K562 (cell line): ENCODE measurements at regions of chr7 and their contacts with region 1.

Region 1: DNA sequence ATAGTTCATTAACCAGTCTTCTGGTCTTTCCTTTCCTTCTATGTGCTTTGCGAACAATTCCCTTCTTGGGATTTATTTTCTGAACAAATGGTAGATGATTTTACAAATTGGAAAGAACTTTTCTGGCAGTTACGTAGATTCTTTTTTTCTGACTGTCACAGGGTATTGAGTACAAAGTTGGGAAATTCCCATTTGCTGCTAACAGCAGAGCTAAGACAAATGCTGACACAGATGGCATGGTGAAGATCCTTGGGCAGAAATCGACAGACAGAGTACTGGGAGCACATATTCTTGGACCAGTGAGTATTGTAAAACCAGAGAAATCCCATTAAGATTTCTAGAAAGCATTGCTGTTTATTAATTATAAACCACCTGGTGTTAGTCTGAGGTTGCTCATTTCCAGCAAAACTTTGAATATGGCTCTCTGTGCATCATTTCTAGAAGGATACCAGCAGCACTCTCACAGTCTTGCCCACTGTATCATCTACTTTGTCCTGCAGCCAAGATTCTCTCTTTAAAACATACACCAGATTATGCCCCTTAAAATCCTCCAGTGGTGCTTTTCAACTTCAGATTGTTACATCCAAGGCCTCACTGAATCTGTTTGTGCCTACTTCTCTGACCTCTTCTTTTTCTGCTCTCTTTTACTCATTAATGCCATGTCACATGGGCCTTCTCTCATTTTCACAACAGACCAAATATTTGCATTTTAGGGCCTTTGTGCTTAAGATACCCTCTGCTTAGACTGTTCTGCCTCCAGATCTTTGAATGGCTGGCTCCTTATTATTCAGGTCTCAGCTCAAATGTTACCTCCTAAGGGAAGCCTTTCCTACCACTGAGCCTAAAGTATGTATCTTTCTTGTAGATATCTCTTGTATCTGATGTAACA is 27.0 kb downstream of the DLD start:
- DNase-seq: no peak
- ATAC-seq: no peak
- H3K4me3 ChIP-seq: no peak overlapping the region
- H3K27ac ChIP-seq: no peak overlapping the region
- H3K4me1 ChIP-seq: no peaks in the 10 kb centered on the region
- H3K27me3 ChIP-seq: no peaks in the 10 kb centered on the region
- CTCF ChIP-seq: no peak
- EP300 ChIP-seq: no peak
- POLR2A ChIP-seq: no peak
- RAD21 ChIP-seq: no peak

Region 2: DNA sequence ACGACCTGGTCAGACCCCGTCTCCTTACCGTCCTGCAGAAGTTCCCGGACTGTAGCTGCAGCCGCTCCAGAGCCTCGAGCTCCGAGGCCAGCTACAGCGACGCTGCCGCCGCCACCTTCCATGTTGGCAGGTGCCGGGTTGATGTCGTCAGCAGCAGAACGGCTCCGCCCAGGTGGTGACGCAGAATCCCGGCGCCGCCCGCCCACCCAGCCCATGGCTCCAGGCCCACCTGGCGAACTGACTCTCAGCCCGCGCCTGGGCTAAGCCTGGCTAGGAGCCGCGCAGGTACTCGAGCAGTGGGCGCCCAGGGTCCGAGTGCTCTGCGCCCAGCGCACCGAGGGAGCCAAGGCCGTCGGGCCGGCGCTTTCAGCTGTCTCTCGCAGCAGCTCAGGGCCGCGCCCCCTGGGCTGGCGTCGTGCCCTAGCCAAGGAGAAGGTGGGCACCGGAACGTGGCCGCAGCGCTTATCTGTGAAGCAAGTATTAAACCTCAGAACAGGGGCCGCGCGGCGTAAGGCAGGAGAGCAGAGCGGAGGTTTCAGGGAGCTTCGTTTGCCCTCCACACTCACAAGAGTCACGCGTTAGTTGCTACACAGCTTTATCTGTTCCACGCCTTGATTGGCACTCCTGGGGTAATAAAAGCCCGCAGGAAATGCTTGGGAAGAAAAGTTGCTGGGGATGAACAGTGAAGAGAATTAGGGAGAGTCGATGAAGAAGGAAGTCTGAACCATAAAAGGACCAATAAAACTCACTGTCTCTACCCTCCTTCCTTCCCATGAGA is 354.0 kb before region 1 on chr7 and contains the starts of genes COG5 and DUS4L:
- CTCF ChIA-PET with region 1: no interaction called
- POLR2A ChIA-PET with region 1: no interaction called
- in situ Hi-C with region 1: no loop called
- intact Hi-C with region 1: no loop called
- DNase-seq: peak; percentile 90 to 95 (median 92)
- ATAC-seq: peak; percentile 91
- H3K4me3 ChIP-seq: peak within 1 kb of the TSS; percentile 74
- H3K27ac ChIP-seq: peak within 1 kb of the TSS; percentile 81
- H3K4me1 ChIP-seq: peaks cover 10 to 27% of the 10 kb centered on the region in 2 experiments; a peak in 4 of 5 replicates
- H3K27me3 ChIP-seq: no peaks in the 10 kb centered on the region
- CTCF ChIP-seq: 0 out of 6 replicates have a peak, but pooled peaks of 1 of the 3 experiments have one; percentile 3
- EP300 ChIP-seq: no peak
- POLR2A ChIP-seq: peak; percentile 94
- RAD21 ChIP-seq: no peak
- polyA plus RNA-seq, gene COG5: 15.3 to 25.9 TPM
- polyA plus RNA-seq, gene DUS4L: 12.2 to 14.5 TPM

Region 3: DNA sequence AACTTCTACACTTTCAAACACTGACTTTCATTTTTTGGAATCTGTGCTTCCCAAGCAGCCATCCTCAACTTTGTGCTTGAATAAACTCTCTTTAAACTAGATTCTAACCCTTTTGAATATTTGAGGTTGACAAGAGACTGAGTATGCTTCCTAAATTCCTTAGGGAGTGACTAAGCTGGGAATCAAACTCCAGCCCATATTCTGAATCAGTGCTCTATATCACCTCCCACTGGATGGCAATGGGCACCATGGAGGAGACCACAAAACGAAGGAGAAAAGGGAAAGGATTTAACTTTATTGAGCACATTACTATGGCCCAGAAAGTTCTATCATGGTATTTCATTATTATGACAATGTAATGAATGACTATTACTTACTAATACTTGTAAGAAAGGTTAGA is 274.6 kb before region 1 on chr7:
- CTCF ChIA-PET with region 1: no interaction called
- POLR2A ChIA-PET with region 1: no interaction called
- in situ Hi-C with region 1: no loop called
- intact Hi-C with region 1: no loop called
- DNase-seq: no peak
- ATAC-seq: peak; percentile 48; the same call in 1 of the 3 replicates
- H3K4me3 ChIP-seq: no peak overlapping the region
- H3K27ac ChIP-seq: no peak overlapping the region
- H3K4me1 ChIP-seq: no peaks in the 10 kb centered on the region
- H3K27me3 ChIP-seq: peaks cover 4 to 6% of the 10 kb centered on the region in 2 experiments; a peak in 2 of 5 replicates
- CTCF ChIP-seq: peak in 1 of 3 experiments; percentile 25; a peak in 1 of 6 replicates
- EP300 ChIP-seq: no peak
- POLR2A ChIP-seq: no peak
- RAD21 ChIP-seq: no peak

Region 4: GRCh38 chr7:107768272-107768671 is 149.7 kb before region 1 on chr7:
- CTCF ChIA-PET with region 1: no interaction called
- POLR2A ChIA-PET with region 1: no interaction called
- in situ Hi-C with region 1: no loop called
- intact Hi-C with region 1: no loop called
- DNase-seq: no peak
- ATAC-seq: no peak
- H3K4me3 ChIP-seq: no peak overlapping the region
- H3K27ac ChIP-seq: no peak overlapping the region
- H3K4me1 ChIP-seq: no peaks in the 10 kb centered on the region
- H3K27me3 ChIP-seq: peaks cover 14 to 16% of the 10 kb centered on the region in 2 experiments; a peak in 3 of 5 replicates
- CTCF ChIP-seq: no peak
- EP300 ChIP-seq: no peak
- POLR2A ChIP-seq: no peak
- RAD21 ChIP-seq: no peak

Region 5: DNA sequence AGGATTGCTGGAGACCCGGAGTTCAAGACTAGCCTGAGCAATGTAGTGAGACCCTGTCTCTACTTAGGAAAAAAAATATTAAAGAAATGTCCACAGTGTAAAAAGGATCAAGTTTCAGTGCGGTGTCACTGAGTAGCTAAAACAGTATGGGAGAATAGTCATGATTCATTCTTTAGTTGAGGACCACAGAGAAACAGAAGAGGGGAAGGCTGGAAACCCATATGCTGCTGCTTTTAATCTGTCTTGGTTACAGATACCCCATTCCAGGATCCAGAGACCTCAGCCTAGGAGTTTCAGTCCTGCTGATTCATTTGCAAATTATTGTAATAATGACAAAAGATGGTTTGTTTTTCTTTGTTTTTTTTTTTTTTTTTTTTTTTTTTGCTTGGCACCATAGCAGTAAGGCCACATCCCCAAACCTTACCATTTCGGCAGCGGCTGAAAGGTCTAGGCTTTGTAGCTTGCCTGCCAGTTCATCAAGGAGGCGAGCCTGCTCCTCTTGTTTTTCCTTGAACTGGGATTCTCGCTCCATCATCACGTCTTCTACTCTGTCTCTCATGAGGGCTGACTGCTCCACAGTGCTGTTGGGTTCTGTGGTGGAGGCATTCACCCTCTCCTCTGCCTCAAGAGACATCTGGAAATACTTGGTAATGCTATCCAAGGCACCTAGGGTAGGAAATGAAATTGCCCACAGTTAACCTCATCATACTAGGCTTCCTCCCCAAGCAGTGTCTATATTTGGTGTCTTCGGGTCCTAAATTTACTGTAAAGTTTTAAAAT is 17.2 kb after region 1 on chr7:
- CTCF ChIA-PET with region 1: no interaction called
- POLR2A ChIA-PET with region 1: interaction called, 14 read pairs
- in situ Hi-C with region 1: no loop called
- intact Hi-C with region 1: no loop called
- DNase-seq: no peak
- ATAC-seq: peak; percentile 32
- H3K4me3 ChIP-seq: no peak overlapping the region
- H3K27ac ChIP-seq: no peak overlapping the region
- H3K4me1 ChIP-seq: no peaks in the 10 kb centered on the region
- H3K27me3 ChIP-seq: no peaks in the 10 kb centered on the region
- CTCF ChIP-seq: no peak
- EP300 ChIP-seq: no peak
- POLR2A ChIP-seq: 0 out of 2 replicates have a peak, but pooled peaks have one; percentile 27
- RAD21 ChIP-seq: no peak

Region 6: DNA sequence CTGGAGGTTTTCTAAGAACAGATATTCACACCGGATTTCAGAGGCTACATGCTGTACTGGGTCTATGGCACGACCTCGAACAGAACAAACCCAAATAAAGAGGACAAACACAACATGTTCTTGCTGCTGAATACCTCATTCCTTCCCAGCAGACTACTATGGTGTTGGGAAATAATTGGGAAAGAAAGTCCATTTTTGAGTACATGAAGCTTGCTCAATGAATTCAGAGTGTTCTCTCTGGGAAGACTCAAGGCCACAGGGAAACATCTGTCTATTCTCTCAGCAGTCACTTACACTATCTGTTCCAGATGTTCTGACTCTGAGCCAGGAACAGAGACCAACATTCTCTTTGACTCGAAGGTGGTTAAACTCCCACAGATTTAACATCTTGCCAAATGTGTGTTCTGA is 54.1 kb after region 1 on chr7:
- CTCF ChIA-PET with region 1: no interaction called
- POLR2A ChIA-PET with region 1: no interaction called
- in situ Hi-C with region 1: no loop called
- intact Hi-C with region 1: loop called (anchors 10 kb)
- DNase-seq: peak; percentile 52 to 72 (median 62)
- ATAC-seq: peak; percentile 77
- H3K4me3 ChIP-seq: no peak overlapping the region
- H3K27ac ChIP-seq: no peak overlapping the region
- H3K4me1 ChIP-seq: peaks cover 0 to 22% of the 10 kb centered on the region in 2 experiments; a peak in 3 of 5 replicates
- H3K27me3 ChIP-seq: no peaks in the 10 kb centered on the region
- CTCF ChIP-seq: no peak
- EP300 ChIP-seq: peak; percentile 36; the same call in 1 of the 2 replicates
- POLR2A ChIP-seq: no peak
- RAD21 ChIP-seq: no peak

Region 7: DNA sequence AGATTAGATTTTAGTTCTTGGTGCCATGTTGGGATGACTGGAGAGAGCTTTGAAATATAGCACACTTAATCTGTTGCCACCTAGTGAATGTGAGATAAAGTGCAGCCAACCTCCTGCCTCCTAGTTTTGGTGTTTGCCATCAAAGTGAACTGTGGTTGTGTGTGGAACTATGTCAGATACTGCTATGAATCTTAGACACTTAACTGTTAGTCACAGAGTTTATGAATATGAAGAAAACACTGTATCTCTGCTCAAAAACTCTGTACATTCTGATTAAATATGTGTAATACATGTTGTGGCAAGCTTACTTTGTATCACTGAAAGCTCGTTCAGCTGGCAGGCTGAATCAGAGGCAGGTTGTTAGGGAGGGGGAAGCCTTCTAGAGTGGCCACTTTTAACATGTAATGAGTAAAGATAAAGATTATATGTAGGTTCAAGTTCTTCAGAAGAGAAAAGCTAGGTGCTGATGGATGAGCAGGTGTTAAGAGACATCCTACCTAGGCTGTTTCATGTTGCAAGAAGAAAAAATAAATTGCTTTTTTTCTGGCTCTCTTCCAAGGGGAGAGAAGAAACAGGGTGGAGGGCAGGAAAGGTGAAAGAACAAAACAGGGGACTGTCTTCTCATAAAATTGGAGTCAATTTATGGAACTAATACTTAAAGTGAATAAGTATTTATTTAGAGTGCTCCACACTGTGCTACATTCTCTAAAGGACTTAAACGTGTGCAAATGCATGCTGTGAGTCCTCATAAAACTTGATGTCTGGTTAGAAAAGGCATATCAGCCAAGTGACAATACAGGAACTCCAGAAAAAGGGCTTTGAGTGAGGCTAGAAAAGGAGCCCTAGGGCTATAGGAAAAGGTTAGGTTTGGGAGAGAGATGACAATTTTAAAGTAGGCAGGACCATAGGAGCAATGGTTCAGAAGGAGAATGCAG is 99.1 kb after region 1 on chr7:
- CTCF ChIA-PET with region 1: no interaction called
- POLR2A ChIA-PET with region 1: no interaction called
- in situ Hi-C with region 1: no loop called
- intact Hi-C with region 1: loop called (anchors 5 kb)
- DNase-seq: peak in 2 of 4 experiments; percentile 45
- ATAC-seq: peak; percentile 68
- H3K4me3 ChIP-seq: no peak overlapping the region
- H3K27ac ChIP-seq: no peak overlapping the region
- H3K4me1 ChIP-seq: peaks cover 5 to 24% of the 10 kb centered on the region in 2 experiments
- H3K27me3 ChIP-seq: no peaks in the 10 kb centered on the region; a peak in 1 of 5 replicates
- CTCF ChIP-seq: peak; percentile 55 to 67 (median 60); a peak in 5 of 6 replicates
- EP300 ChIP-seq: no peak
- POLR2A ChIP-seq: no peak
- RAD21 ChIP-seq: peak; percentile 51 to 60

Region 8: DNA sequence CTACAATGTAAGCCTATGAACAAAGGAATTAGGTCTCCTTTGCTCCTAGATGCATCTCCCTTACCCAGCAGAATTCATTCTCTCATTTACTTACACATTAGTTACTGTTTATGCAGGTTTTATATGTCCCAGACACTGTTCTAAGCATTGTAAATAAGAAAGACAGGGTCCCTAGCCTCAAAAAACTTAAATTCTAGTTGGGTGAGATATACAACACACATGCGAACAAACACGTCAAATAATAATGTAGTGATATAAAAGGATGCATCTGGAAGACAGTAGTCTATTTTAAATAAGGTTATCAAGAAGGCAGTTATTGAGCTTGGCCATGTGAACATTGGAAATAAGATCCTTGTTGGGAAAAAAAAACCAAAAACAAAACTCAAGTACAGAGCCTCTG is 1131.4 kb after region 1 on chr7:
- CTCF ChIA-PET with region 1: no interaction called
- POLR2A ChIA-PET with region 1: no interaction called
- in situ Hi-C with region 1: no loop called
- intact Hi-C with region 1: no loop called
- DNase-seq: no peak
- ATAC-seq: no peak
- H3K4me3 ChIP-seq: no peak overlapping the region
- H3K27ac ChIP-seq: no peak overlapping the region
- H3K4me1 ChIP-seq: no peaks in the 10 kb centered on the region
- H3K27me3 ChIP-seq: no peaks in the 10 kb centered on the region
- CTCF ChIP-seq: no peak
- EP300 ChIP-seq: no peak
- POLR2A ChIP-seq: no peak
- RAD21 ChIP-seq: no peak